CD4-positive, alpha-beta T cell (primary cell): ENCODE measurements at regions of chr10 and their contacts with region 1.

Region 1: GRCh38 chr10:31383810-31384588 is 65.0 kb downstream of the ZEB1 start:
- DNase-seq: no peak
- ATAC-seq: no peak
- H3K4me3 ChIP-seq: no peak overlapping the region
- H3K4me3 Mint-ChIP-seq: no peak overlapping the region
- H3K27ac ChIP-seq: no peak overlapping the region
- H3K27ac Mint-ChIP-seq: no peak overlapping the region
- H3K4me1 ChIP-seq: peaks cover 2% of the 10 kb centered on the region
- H3K4me1 Mint-ChIP-seq: peaks cover 54% of the 10 kb centered on the region
- H3K27me3 ChIP-seq: no peaks in the 10 kb centered on the region
- H3K27me3 Mint-ChIP-seq: no peaks in the 10 kb centered on the region
- CTCF ChIP-seq: no peak

Region 2: DNA sequence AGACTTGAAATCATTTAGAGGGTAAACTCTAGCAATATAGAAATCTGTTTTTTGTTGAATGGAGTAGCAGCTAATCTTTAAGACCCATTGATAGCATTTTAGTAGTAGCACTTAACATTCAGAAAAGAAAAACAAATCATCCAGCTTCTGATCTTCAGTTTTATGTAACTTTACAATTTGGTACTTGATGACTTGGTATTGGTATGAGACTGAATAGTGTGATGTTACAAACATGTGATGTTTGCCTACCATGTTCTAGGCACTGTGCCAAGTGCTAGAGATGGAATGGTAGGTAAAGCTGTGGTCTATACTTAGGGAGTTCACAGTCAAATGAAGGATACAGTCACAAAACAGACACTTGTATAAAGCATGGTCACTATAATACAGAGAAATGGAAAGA is 43.7 kb before region 1 on chr10:
- CTCF ChIA-PET with region 1: no interaction called
- POLR2A ChIA-PET with region 1: no interaction called
- intact Hi-C with region 1: loop called in 1 of 2 experiments (anchors 5 kb)
- DNase-seq: no peak
- ATAC-seq: peak; percentile 33
- H3K4me3 ChIP-seq: no peak overlapping the region
- H3K4me3 Mint-ChIP-seq: no peak overlapping the region
- H3K27ac ChIP-seq: no peak overlapping the region
- H3K27ac Mint-ChIP-seq: no peak overlapping the region
- H3K4me1 ChIP-seq: no peaks in the 10 kb centered on the region
- H3K4me1 Mint-ChIP-seq: peaks cover 38% of the 10 kb centered on the region
- H3K27me3 ChIP-seq: no peaks in the 10 kb centered on the region
- H3K27me3 Mint-ChIP-seq: no peaks in the 10 kb centered on the region
- CTCF ChIP-seq: no peak

Region 3: GRCh38 chr10:32023264-32023663 is 639.3 kb after region 1 on chr10:
- CTCF ChIA-PET with region 1: no interaction called
- POLR2A ChIA-PET with region 1: no interaction called
- intact Hi-C with region 1: no loop called
- DNase-seq: no peak
- ATAC-seq: no peak
- H3K4me3 ChIP-seq: no peak overlapping the region
- H3K4me3 Mint-ChIP-seq: no peak overlapping the region
- H3K27ac ChIP-seq: no peak overlapping the region
- H3K27ac Mint-ChIP-seq: no peak overlapping the region
- H3K4me1 ChIP-seq: no peaks in the 10 kb centered on the region
- H3K4me1 Mint-ChIP-seq: peaks cover 4% of the 10 kb centered on the region
- H3K27me3 ChIP-seq: no peaks in the 10 kb centered on the region
- H3K27me3 Mint-ChIP-seq: no peaks in the 10 kb centered on the region
- CTCF ChIP-seq: no peak